Activated B cell treated with CpG ODN at 0.5 μM for 24 hours (primary cell): ENCODE measurements at regions of chr1 and their contacts with region 1.

Region 1: GRCh38 chr1:3727042-3727824 is 25.0 kb upstream of the CCDC27 start:
- DNase-seq: no peak
- ATAC-seq: peak; percentile 64
- H3K4me3 Mint-ChIP-seq: no peak overlapping the region
- H3K27ac Mint-ChIP-seq: no peak overlapping the region
- H3K4me1 Mint-ChIP-seq: peaks cover 4% of the 10 kb centered on the region
- H3K27me3 Mint-ChIP-seq: peaks cover 4% of the 10 kb centered on the region
- CTCF ChIP-seq: no peak

Region 2: DNA sequence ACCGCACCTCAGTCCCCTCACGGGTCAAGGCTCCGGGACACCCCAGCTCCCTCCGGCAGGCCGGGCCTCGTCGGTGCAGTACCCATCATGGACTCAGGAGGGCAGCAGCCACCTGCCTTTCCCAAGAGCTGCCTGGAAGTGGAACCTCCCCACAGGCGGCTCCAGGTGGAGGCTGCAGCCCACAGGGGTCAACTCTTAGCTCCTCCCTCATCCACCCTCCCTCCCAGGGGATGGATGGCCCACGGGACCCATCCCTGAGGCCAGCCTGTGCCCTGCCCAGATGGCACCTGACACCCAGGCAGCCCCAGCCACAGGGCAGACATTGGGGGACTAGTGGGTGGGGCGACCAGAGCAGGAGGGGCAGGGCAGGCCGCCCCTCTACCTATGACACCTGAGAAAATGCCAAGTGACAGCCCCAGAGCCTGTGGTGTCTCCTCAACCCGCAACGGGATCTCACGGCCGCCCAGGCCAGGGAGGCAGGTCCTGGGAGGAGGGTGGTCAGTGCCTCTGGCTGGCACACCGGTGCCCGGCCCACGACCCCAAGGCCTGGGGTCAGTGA is 274.0 kb before region 1 on chr1:
- CTCF ChIA-PET with region 1: interaction called, 13 read pairs
- POLR2A ChIA-PET with region 1: no interaction called
- intact Hi-C with region 1: loop called (anchors 1 kb)
- DNase-seq: peak; percentile 73
- ATAC-seq: peak; percentile 81
- H3K4me3 Mint-ChIP-seq: peak overlapping the region; percentile 41
- H3K27ac Mint-ChIP-seq: no peak overlapping the region
- H3K4me1 Mint-ChIP-seq: peaks cover 2% of the 10 kb centered on the region
- H3K27me3 Mint-ChIP-seq: peaks cover 19% of the 10 kb centered on the region
- CTCF ChIP-seq: peak; percentile 46

Region 3: GRCh38 chr1:3564921-3565827 is 162.1 kb before region 1 on chr1:
- CTCF ChIA-PET with region 1: interaction called, 13 read pairs
- POLR2A ChIA-PET with region 1: no interaction called
- intact Hi-C with region 1: loop called (anchors 1 kb)
- DNase-seq: peak; percentile 40
- ATAC-seq: peak; percentile 57
- H3K4me3 Mint-ChIP-seq: no peak overlapping the region
- H3K27ac Mint-ChIP-seq: no peak overlapping the region
- H3K4me1 Mint-ChIP-seq: no peaks in the 10 kb centered on the region
- H3K27me3 Mint-ChIP-seq: peaks cover 3% of the 10 kb centered on the region
- CTCF ChIP-seq: no peak

Region 4: GRCh38 chr1:3695326-3696217 is 31.7 kb before region 1 on chr1:
- CTCF ChIA-PET with region 1: interaction called, 10 read pairs
- POLR2A ChIA-PET with region 1: no interaction called
- intact Hi-C with region 1: no loop called
- DNase-seq: no peak
- ATAC-seq: peak; percentile 93
- H3K4me3 Mint-ChIP-seq: peak overlapping the region; percentile 60
- H3K27ac Mint-ChIP-seq: no peak overlapping the region
- H3K4me1 Mint-ChIP-seq: peaks cover 8% of the 10 kb centered on the region
- H3K27me3 Mint-ChIP-seq: peaks cover 8% of the 10 kb centered on the region
- CTCF ChIP-seq: peak; percentile 20